Activated CD4-positive, alpha-beta T cell treated with anti-CD3 and anti-CD28 coated beads for 36 hours (primary cell): ENCODE measurements at regions of chr17 and their contacts with region 1.

Region 1: GRCh38 chr17:40559954-40560591 is 5.2 kb downstream of the CCR7 start:
- DNase-seq: peak; percentile 90
- ATAC-seq: no peak
- H3K4me3 Mint-ChIP-seq: peak overlapping the region; percentile 94
- H3K27ac Mint-ChIP-seq: peak overlapping the region; percentile 98
- H3K4me1 Mint-ChIP-seq: peaks cover 60% of the 10 kb centered on the region
- H3K27me3 Mint-ChIP-seq: no peaks in the 10 kb centered on the region

Region 2: GRCh38 chr17:40086150-40087044 is 473.7 kb before region 1 on chr17:
- CTCF ChIA-PET with region 1: no interaction called
- POLR2A ChIA-PET with region 1: no interaction called
- intact Hi-C with region 1: no loop called
- DNase-seq: peak; percentile 81
- ATAC-seq: peak; percentile 78
- H3K4me3 Mint-ChIP-seq: no peak overlapping the region
- H3K27ac Mint-ChIP-seq: no peak overlapping the region
- H3K4me1 Mint-ChIP-seq: peaks cover 5% of the 10 kb centered on the region
- H3K27me3 Mint-ChIP-seq: no peaks in the 10 kb centered on the region

Region 3: GRCh38 chr17:40098846-40099618 is 461.0 kb before region 1 on chr17:
- CTCF ChIA-PET with region 1: no interaction called
- POLR2A ChIA-PET with region 1: no interaction called
- intact Hi-C with region 1: loop called in 1 of 2 experiments (anchors 5 kb)
- DNase-seq: peak; percentile 99
- ATAC-seq: peak; percentile 59
- H3K4me3 Mint-ChIP-seq: peak overlapping the region; percentile 88
- H3K27ac Mint-ChIP-seq: peak overlapping the region; percentile 90
- H3K4me1 Mint-ChIP-seq: peaks cover 86% of the 10 kb centered on the region
- H3K27me3 Mint-ChIP-seq: no peaks in the 10 kb centered on the region

Region 4: GRCh38 chr17:40417609-40418427 is 142.3 kb before region 1 on chr17 and contains the start of gene TOP2A:
- CTCF ChIA-PET with region 1: interaction called, 11 read pairs
- POLR2A ChIA-PET with region 1: interaction called, 14 read pairs
- intact Hi-C with region 1: loop called in 1 of 2 experiments (anchors 2 kb)
- DNase-seq: peak; percentile 95
- ATAC-seq: peak; percentile 99
- H3K4me3 Mint-ChIP-seq: peak within 1 kb of the TSS; percentile 86
- H3K27ac Mint-ChIP-seq: peak within 1 kb of the TSS; percentile 89
- H3K4me1 Mint-ChIP-seq: peaks cover 24% of the 10 kb centered on the region
- H3K27me3 Mint-ChIP-seq: no peaks in the 10 kb centered on the region
- total RNA-seq, gene TOP2A: 245 to 322 TPM

Region 5: DNA sequence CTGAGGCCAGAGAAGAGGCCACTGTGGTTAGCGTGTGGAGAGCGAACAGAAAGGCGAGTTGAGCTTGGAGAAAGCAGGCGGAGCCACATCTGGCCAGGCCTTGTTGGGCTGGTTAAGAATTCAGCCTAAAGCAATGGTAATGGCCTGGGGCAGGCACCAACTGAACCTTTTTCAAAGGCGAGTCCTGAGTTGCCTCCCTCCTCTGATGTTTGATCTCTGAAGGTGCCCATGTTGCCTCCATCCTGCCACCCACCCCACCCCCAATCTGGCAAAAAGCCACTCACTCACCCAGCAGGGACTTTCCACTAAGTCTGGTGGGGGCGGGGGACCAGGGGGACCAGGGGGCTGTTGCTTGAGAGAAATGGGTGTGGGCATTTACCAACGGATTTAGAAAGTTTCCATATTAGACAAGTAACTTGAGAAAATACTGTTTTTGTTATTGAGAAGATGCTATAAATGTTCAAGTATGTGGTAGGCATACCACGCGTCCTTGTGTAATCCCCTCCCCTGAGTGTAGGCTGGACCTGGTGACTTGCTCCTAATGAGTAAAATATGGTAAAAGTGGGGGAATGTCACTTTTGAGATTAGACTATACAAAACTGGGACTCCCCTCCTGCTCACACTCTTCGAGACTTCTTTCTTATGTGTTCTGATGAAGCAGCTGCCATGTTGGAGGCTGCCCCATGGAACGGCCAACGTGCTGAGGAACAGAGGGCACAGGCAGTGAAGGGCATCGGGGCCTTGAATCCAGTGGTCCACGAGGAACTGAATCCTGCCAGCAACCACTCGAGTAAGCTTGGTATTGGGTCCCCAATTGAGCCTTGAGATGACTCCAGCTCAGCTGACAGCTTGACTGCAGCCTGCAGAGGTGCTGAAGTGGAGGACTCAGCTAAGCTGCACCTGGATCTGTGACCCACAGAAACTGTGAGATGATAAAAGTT is 28.8 kb before region 1 on chr17:
- CTCF ChIA-PET with region 1: interaction called, 403 read pairs
- POLR2A ChIA-PET with region 1: interaction called, 42 read pairs
- intact Hi-C with region 1: loop called in 1 of 2 experiments (anchors 1 kb)
- DNase-seq: peak; percentile 95
- ATAC-seq: peak; percentile 81
- H3K4me3 Mint-ChIP-seq: peak overlapping the region; percentile 60
- H3K27ac Mint-ChIP-seq: peak overlapping the region; percentile 92
- H3K4me1 Mint-ChIP-seq: peaks cover 75% of the 10 kb centered on the region
- H3K27me3 Mint-ChIP-seq: no peaks in the 10 kb centered on the region

Region 6: GRCh38 chr17:40608061-40608588 is 48.1 kb after region 1 on chr17:
- CTCF ChIA-PET with region 1: interaction called, 149 read pairs
- POLR2A ChIA-PET with region 1: interaction called, 195 read pairs
- intact Hi-C with region 1: loop called in 1 of 2 experiments (anchors 1 kb)
- DNase-seq: peak; percentile 52
- ATAC-seq: peak; percentile 61
- H3K4me3 Mint-ChIP-seq: peak overlapping the region; percentile 39
- H3K27ac Mint-ChIP-seq: peak overlapping the region; percentile 86
- H3K4me1 Mint-ChIP-seq: peaks cover 98% of the 10 kb centered on the region
- H3K27me3 Mint-ChIP-seq: no peaks in the 10 kb centered on the region

Region 7: GRCh38 chr17:40647624-40648383 is 87.7 kb after region 1 on chr17 and contains the start of gene SMARCE1:
- CTCF ChIA-PET with region 1: interaction called, 7 read pairs
- POLR2A ChIA-PET with region 1: interaction called, 22 read pairs
- intact Hi-C with region 1: loop called in 1 of 2 experiments (anchors 1 kb)
- DNase-seq: peak; percentile 79
- ATAC-seq: peak; percentile 81
- H3K4me3 Mint-ChIP-seq: peak within 1 kb of the TSS; percentile 97
- H3K27ac Mint-ChIP-seq: peak within 1 kb of the TSS; percentile 99
- H3K4me1 Mint-ChIP-seq: peaks cover 40% of the 10 kb centered on the region
- H3K27me3 Mint-ChIP-seq: no peaks in the 10 kb centered on the region
- total RNA-seq, gene SMARCE1: 99.7 to 122 TPM

Region 8: GRCh38 chr17:40659911-40660310 is 99.8 kb after region 1 on chr17:
- CTCF ChIA-PET with region 1: no interaction called
- POLR2A ChIA-PET with region 1: no interaction called
- intact Hi-C with region 1: no loop called
- DNase-seq: peak; percentile 25
- ATAC-seq: no peak
- H3K4me3 Mint-ChIP-seq: no peak overlapping the region
- H3K27ac Mint-ChIP-seq: no peak overlapping the region
- H3K4me1 Mint-ChIP-seq: peaks cover 8% of the 10 kb centered on the region
- H3K27me3 Mint-ChIP-seq: peaks cover 14% of the 10 kb centered on the region

Region 9: GRCh38 chr17:41665566-41666236 is 1105.6 kb after region 1 on chr17:
- CTCF ChIA-PET with region 1: no interaction called
- POLR2A ChIA-PET with region 1: interaction called, 3 read pairs
- intact Hi-C with region 1: loop called in 1 of 2 experiments (anchors 2 kb)
- DNase-seq: peak; percentile 95
- ATAC-seq: peak; percentile 85
- H3K4me3 Mint-ChIP-seq: peak overlapping the region; percentile 78
- H3K27ac Mint-ChIP-seq: peak overlapping the region; percentile 95
- H3K4me1 Mint-ChIP-seq: peaks cover 42% of the 10 kb centered on the region
- H3K27me3 Mint-ChIP-seq: peaks cover 3% of the 10 kb centered on the region